Right ventricle myocardium superior (tissue), 1 donor: ENCODE measurements at regions of chr15 and their contacts with region 1.

Region 1: DNA sequence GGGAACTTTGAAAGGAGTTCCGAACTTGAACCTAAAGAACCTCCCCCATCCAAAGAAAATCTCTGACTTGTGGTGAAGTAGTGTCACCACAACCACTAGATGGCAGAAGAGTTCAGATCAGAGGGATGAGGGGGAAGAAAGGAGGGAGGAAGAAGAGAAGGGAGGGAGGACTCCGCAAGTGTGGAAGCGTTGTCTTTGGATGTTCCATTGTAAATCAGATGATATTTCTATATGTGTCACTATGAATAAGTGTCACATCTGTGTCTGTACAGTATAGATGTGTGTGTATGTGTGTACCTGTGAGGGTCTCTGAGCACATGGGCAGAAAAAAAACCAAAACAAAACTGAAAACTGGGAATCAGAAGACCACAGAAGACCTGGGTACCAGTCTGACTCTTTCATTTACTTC is 16.9 kb downstream of the SLC24A1 start:
- DNase-seq: no peak
- ATAC-seq: peak; percentile 90

Region 2: DNA sequence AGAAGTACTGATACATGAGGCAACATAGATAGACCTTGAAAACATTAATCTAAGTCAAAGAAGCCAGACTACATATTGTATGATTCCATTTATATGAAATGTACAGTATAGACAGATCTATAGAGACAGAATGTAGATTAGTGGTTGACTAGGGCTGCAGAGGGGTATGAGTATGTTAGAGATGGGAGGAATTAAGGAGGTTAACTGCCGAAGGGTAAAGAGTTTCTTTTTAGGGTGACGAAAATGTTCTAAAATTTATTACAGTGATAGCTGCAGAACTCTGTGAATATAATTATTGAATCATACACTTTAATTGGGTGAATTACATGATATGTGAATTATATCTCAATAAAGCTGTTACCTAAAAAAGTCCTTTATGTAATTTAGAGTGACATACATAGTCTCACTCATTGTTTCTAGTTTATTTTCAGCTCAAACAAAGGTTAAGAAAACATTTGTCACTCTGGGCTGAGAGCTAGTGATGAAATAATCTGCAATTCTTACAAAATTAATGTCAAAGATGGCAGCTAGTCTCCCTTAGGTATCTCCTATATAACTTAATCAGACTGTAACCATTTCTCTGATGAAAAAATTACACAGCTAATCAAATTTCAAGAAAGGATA is 92.0 kb after region 1 on chr15:
- intact Hi-C with region 1: no loop called
- DNase-seq: no peak
- ATAC-seq: no peak

Region 3: GRCh38 chr15:65766422-65767263 is 128.0 kb after region 1 on chr15:
- intact Hi-C with region 1: no loop called
- DNase-seq: no peak
- ATAC-seq: no peak

Region 4: GRCh38 chr15:65856821-65857455 is 218.3 kb after region 1 on chr15:
- intact Hi-C with region 1: loop called (anchors 2 kb)
- DNase-seq: peak; percentile 78
- ATAC-seq: peak; percentile 73